Activated B cell treated with CpG ODN at 0.5 μM for 24 hours (primary cell): ENCODE measurements at regions of chr5 and their contacts with region 1.

Region 1: GRCh38 chr5:124683917-124684561 is 62.4 kb downstream of the ZNF608 start:
- DNase-seq: no peak
- ATAC-seq: no peak
- H3K4me3 Mint-ChIP-seq: no peak overlapping the region
- H3K27ac Mint-ChIP-seq: no peak overlapping the region
- H3K4me1 Mint-ChIP-seq: peaks cover 48% of the 10 kb centered on the region
- H3K27me3 Mint-ChIP-seq: no peaks in the 10 kb centered on the region
- CTCF ChIP-seq: no peak

Region 2: GRCh38 chr5:124669956-124670721 is 13.9 kb before region 1 on chr5:
- CTCF ChIA-PET with region 1: no interaction called
- POLR2A ChIA-PET with region 1: no interaction called
- intact Hi-C with region 1: loop called (anchors 2 kb)
- DNase-seq: no peak
- ATAC-seq: no peak
- H3K4me3 Mint-ChIP-seq: no peak overlapping the region
- H3K27ac Mint-ChIP-seq: no peak overlapping the region
- H3K4me1 Mint-ChIP-seq: peaks cover 16% of the 10 kb centered on the region
- H3K27me3 Mint-ChIP-seq: no peaks in the 10 kb centered on the region
- CTCF ChIP-seq: no peak

Region 3: DNA sequence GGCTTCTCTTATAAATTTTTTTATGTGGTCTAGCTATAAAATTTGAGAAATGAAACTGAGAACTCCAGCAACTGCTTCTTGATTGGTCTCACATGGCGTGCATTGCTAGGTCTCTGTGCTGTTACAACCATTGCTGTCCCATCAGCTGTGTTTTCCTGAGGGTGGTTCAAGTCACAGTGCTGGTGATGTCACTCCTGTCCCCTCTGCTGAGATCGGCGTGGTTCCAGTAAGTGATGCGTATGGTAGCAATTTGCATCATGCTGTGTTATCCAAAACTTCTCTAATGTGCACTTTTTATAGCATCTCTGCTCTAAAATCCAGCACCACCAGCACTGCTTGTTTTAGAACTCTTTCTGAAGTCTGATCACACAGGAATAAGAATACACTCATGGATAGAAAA is 175.0 kb after region 1 on chr5:
- CTCF ChIA-PET with region 1: no interaction called
- POLR2A ChIA-PET with region 1: no interaction called
- intact Hi-C with region 1: no loop called
- DNase-seq: peak; percentile 26
- ATAC-seq: peak; percentile 95
- H3K4me3 Mint-ChIP-seq: no peak overlapping the region
- H3K27ac Mint-ChIP-seq: peak overlapping the region; percentile 46
- H3K4me1 Mint-ChIP-seq: peaks cover 17% of the 10 kb centered on the region
- H3K27me3 Mint-ChIP-seq: no peaks in the 10 kb centered on the region
- CTCF ChIP-seq: no peak